Heart right ventricle (tissue), 16 donors: ENCODE measurements at regions of chr22 and their contacts with region 1.

Region 1: DNA sequence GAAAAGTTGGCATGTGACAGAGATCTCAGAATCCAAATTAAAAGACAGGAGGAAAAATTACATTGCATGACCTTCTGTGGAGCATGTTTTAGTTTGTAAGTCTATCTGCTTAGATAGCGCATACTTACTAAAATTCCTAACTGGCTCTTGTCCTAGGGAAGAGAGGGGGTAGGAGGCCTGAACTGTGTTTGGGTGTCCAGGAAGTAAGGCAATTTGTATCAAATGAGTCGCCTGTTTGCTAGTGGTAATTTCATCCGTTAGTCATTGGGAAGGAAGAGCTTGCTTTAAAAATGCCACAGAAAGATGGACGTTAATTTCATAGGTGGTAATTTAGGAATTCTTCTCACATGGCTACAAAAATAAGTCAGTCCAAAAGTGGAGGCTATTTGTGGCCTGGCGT is 18.5 kb downstream of the GRK3 start:
- DNase-seq: no peak
- ATAC-seq: no peak
- H3K4me3 ChIP-seq: no peak overlapping the region
- H3K27ac ChIP-seq: no peak overlapping the region
- H3K4me1 ChIP-seq: peaks cover 0 to 14% (median 7%) of the 10 kb centered on the region in 9 donors
- H3K27me3 ChIP-seq: no peaks in the 10 kb centered on the region
- CTCF ChIP-seq: no peak

Region 2: GRCh38 chr22:25282671-25283561 is 300.0 kb before region 1 on chr22:
- intact Hi-C with region 1: loop called in 4 of 10 experiments (anchors 10 kb)
- DNase-seq: no peak
- ATAC-seq: no peak
- H3K4me3 ChIP-seq: peak overlapping the region in 3 of 10 donors; percentile 13 to 21 (median 17)
- H3K27ac ChIP-seq: no peak overlapping the region
- H3K4me1 ChIP-seq: peaks cover 0 to 9% (median 3%) of the 10 kb centered on the region in 9 donors
- H3K27me3 ChIP-seq: peaks cover 19 to 76% (median 60%) of the 10 kb centered on the region in 7 donors
- CTCF ChIP-seq: no peak